Activated CD8-positive, alpha-beta T cell treated with anti-CD3 and anti-CD28 coated beads, Interleukin-2, amount 10 ng/mL, durations not matched to agents 7 days and 5 days (primary cell): ENCODE measurements at regions of chr10 and their contacts with region 1.

Region 1: DNA sequence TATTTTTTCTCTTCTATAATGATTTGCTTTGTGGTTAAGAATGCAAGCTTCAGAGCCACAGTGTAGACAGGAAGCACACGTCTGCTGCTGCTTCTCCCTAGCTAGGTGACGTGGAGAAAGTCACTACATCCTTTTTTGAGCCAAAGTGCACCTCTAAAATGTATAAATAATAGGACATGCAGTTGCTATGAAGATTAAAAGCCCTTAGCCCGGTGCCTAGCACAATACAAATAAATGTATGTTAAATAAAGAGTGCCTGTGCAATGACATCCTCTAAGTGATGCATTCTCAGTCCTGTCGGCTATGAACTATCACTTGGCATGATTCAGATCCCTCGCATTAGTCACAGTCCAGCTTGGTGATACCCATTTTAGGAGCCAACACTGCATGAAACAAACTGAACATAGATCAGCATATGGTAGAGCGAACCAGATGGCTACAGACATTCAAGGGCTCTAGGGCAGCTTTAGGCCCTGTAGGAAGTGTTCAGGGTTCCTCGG is 4.8 kb upstream of the TRDMT1 start:
- DNase-seq: peak; percentile 63
- ATAC-seq: peak; percentile 65
- H3K4me3 Mint-ChIP-seq: no peak overlapping the region
- H3K27ac Mint-ChIP-seq: peak overlapping the region; percentile 84
- H3K4me1 Mint-ChIP-seq: peaks cover 63% of the 10 kb centered on the region
- H3K27me3 Mint-ChIP-seq: no peaks in the 10 kb centered on the region

Region 2: GRCh38 chr10:17216217-17216900 is 10.1 kb after region 1 on chr10:
- CTCF ChIA-PET with region 1: interaction called, 13 read pairs
- POLR2A ChIA-PET with region 1: interaction called, 14 read pairs
- DNase-seq: peak; percentile 67
- ATAC-seq: peak; percentile 97
- H3K4me3 Mint-ChIP-seq: peak overlapping the region; percentile 44
- H3K27ac Mint-ChIP-seq: peak overlapping the region; percentile 86
- H3K4me1 Mint-ChIP-seq: peaks cover 52% of the 10 kb centered on the region
- H3K27me3 Mint-ChIP-seq: no peaks in the 10 kb centered on the region